ENCODE measurements at regions of chr9 and their contacts with region 1.

Region 1: DNA sequence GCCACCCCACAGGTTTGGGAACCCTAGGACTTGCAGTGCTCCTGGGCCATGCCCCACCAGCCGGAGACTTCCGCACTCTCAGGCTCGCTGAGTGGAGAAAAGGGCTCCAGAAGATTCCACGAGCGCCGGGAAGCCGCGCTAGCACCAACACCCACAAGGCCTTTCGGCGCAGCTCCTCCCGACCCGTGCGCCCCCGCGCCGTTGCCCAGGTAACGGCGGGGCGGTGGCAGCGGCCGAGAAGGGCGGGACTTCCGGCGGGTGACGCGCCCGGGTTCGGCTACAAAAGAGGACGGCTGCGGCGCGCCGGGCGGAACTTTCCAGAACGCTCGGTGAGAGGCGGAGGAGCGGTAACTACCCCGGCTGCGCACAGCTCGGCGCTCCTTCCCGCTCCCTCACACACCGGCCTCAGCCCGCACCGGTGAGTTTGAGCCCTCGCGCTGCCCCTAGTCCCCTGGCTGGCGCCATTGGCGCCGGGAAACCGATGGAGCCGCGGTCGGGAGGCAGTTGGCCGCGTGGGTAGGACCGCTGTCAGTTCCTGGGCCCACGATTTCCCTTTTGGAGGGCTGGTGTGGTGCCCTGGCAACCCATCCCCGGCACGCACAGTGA is at the start of gene DNAJA1:
- DNase-seq: peak; percentile 91 to 97 (median 96)
- ATAC-seq: peak; percentile 79 to 83
- H3K4me3 Mint-ChIP-seq: peak within 1 kb of the TSS; percentile 84 to 98 (median 92)
- H3K27ac Mint-ChIP-seq: peak within 1 kb of the TSS; percentile 83 to 98 (median 96)
- H3K4me1 Mint-ChIP-seq: peaks cover 39 to 79% (median 75%) of the 10 kb centered on the region in 4 donors
- H3K27me3 Mint-ChIP-seq: no peaks in the 10 kb centered on the region
- polyA plus RNA-seq, gene DNAJA1: 62.8 to 101 (median 70.7) TPM

Region 2: GRCh38 chr9:33007755-33008154 is 17.3 kb before region 1 on chr9:
- POLR2A ChIA-PET with region 1: interaction called, 10 read pairs
- DNase-seq: no peak
- ATAC-seq: no peak
- H3K4me3 Mint-ChIP-seq: peak overlapping the region in 1 of 10 donors; percentile 24
- H3K27ac Mint-ChIP-seq: no peak overlapping the region
- H3K4me1 Mint-ChIP-seq: peaks cover under 1 to 8% (median 5%) of the 10 kb centered on the region in 4 donors
- H3K27me3 Mint-ChIP-seq: no peaks in the 10 kb centered on the region

Region 3: GRCh38 chr9:33044127-33044673 is 19.1 kb after region 1 on chr9:
- POLR2A ChIA-PET with region 1: interaction called, 10 read pairs
- DNase-seq: peak; percentile 38 to 77 (median 57)
- ATAC-seq: peak; percentile 69 to 79
- H3K4me3 Mint-ChIP-seq: peak overlapping the region; percentile 73 to 88 (median 83)
- H3K27ac Mint-ChIP-seq: peak overlapping the region in 9 of 10 donors; percentile 37 to 88 (median 61)
- H3K4me1 Mint-ChIP-seq: peaks cover 8 to 25% (median 14%) of the 10 kb centered on the region in 4 donors
- H3K27me3 Mint-ChIP-seq: no peaks in the 10 kb centered on the region

Region 4: GRCh38 chr9:33076358-33077004 is 51.4 kb after region 1 on chr9 and contains the start of gene SMU1:
- POLR2A ChIA-PET with region 1: interaction called, 19 read pairs
- DNase-seq: peak; percentile 85 to 98 (median 96)
- ATAC-seq: peak; percentile 92 to 95
- H3K4me3 Mint-ChIP-seq: peak within 1 kb of the TSS; percentile 92 to 100 (median 99)
- H3K27ac Mint-ChIP-seq: peak within 1 kb of the TSS; percentile 96 to 100 (median 100)
- H3K4me1 Mint-ChIP-seq: peaks cover 18 to 52% (median 44%) of the 10 kb centered on the region in 4 donors
- H3K27me3 Mint-ChIP-seq: peaks cover 0 to 2% (median 0%) of the 10 kb centered on the region in 5 donors
- polyA plus RNA-seq, gene SMU1: 19.5 to 24.3 (median 23.7) TPM

Region 5: DNA sequence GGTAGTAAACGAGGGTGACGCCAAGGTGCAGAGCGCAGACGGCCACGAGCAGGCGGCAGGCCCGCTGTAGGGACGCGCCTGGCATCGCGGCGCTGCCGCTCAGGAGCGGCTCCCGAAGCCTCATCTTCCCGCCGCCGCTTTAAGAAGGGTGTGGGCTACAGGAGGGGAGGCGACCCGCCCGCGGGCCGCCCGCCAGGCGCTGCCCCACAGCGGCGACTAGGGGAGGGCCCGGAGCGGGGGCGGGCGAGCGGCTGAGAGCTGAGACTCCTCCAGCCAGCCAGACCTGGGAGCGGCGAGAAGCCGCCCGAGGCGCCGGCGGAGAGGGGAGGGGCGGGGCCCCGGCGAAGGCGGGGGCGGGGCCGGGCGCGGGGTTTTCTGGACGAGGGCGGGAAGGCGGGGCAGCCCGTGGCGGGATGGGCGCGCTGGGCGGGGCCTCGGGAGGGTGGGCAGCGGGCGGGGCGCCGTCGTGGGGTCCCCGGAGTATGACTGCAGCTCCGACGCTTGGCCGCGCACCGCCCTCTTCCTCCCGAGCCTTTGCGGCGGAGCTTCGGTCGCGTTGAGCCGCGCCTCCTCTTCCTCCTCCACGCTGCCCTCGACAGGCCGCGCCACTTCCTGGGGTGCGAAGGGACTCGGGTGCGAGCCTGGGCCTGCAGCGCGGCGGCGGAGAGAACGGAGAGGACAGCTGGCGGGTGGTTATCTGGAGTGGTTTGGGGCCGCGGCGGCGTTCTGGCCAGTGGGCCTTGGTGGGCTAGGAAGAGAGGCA is 142.2 kb after region 1 on chr9 and contains the start of gene B4GALT1:
- POLR2A ChIA-PET with region 1: interaction called, 14 read pairs
- DNase-seq: peak; percentile 86 to 99 (median 93)
- ATAC-seq: peak; percentile 81 to 82
- H3K4me3 Mint-ChIP-seq: peak within 1 kb of the TSS; percentile 89 to 99 (median 96)
- H3K27ac Mint-ChIP-seq: peak within 1 kb of the TSS; percentile 94 to 100 (median 99)
- H3K4me1 Mint-ChIP-seq: peaks cover 42 to 70% (median 63%) of the 10 kb centered on the region in 4 donors
- H3K27me3 Mint-ChIP-seq: no peaks in the 10 kb centered on the region
- polyA plus RNA-seq, gene B4GALT1: 15.1 to 24.2 (median 18.6) TPM

Region 6: GRCh38 chr9:33290247-33291030 is 265.4 kb after region 1 on chr9 and contains the start of gene NFX1:
- POLR2A ChIA-PET with region 1: interaction called, 12 read pairs
- DNase-seq: peak; percentile 93 to 100 (median 99)
- ATAC-seq: peak; percentile 84 to 85
- H3K4me3 Mint-ChIP-seq: peak within 1 kb of the TSS; percentile 82 to 99 (median 95)
- H3K27ac Mint-ChIP-seq: peak within 1 kb of the TSS; percentile 97 to 100 (median 99)
- H3K4me1 Mint-ChIP-seq: peaks cover 27 to 72% (median 63%) of the 10 kb centered on the region in 4 donors
- H3K27me3 Mint-ChIP-seq: peaks cover 0 to 2% (median 0%) of the 10 kb centered on the region in 5 donors
- polyA plus RNA-seq, gene NFX1: 22.8 to 42.7 (median 31.6) TPM